ENCODE measurements at regions of chr19 and their contacts with region 1.

Region 1: GRCh38 chr19:17282488-17283255 is 971 bp downstream of the ANKLE1 start:
- ATAC-seq: peak; percentile 92 to 96 (median 94)
- H3K4me3 ChIP-seq: peak overlapping the region in 3 of 5 donors; percentile 10 to 20 (median 13)
- H3K27ac ChIP-seq: no peak overlapping the region
- H3K4me1 ChIP-seq: peaks cover 0 to 11% of the 10 kb centered on the region in 2 donors

Region 2: DNA sequence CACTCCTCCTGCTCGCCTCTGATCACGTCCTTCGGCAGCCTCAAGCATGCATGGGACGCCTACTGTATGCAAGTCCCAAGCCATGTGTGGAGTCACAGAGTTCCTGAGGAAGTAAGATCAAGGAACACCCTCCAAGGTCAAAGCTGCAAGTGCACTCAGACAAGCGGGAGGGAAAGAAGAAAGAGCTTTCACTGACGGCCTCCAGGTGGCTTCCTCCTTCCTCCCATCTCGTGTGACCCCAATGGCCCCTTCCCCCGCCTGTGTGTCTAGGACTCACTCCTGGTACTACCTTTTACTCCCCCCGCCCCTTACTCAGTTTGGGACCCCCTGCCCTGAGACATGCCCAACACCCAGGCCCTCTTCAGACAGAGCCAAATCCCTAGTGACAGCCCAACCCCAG is 213.5 kb before region 1 on chr19:
- in situ Hi-C with region 1: loop called in 8 of 9 experiments (anchors 10 to 25 kb)
- ATAC-seq: no peak
- H3K4me3 ChIP-seq: no peak overlapping the region
- H3K27ac ChIP-seq: no peak overlapping the region
- H3K4me1 ChIP-seq: peaks cover 5 to 8% of the 10 kb centered on the region in 2 donors

Region 3: DNA sequence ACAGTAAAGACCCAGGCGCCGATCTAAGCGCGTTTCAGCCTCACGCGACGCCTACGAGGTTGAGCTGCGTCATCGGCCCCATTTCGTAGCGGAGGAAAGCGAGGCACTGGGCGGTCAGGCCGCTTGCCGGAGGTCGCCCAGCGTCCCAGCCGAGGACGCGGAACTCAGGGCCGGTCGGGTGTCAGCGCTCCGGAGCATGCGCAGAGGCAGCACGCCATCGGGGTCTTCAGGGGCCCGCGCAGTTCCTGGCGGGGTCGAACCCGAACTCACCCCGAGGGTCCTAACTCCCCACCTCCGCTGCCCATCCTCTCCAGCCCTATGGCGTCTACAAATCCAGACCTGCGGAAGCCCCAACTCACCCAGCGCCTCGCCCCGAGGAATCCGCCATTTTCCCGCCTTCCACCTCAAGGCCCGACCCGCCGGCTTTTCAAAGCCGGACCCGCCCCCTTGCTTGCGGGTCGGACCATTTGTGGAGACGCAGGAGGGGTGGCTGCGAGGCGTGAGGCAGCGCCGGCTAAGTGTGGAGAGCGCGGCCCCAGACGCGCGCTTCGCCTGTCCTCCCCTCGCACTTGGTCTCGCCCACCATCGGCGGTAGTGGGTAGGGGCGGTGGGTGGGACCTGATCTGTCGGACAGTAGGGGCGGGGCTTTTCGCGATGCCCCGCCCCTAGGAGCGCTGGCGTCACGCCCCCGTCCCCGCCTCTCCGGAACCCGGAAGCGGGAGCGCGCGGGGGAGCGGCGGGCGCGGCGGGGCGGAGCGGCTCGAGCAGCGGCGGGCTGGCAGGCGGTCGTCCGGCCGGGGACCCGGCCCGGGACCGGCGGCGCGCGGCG is 207.4 kb before region 1 on chr19 and contains the starts of genes HAUS8 and MYO9B:
- in situ Hi-C with region 1: loop called in 6 of 9 experiments (anchors 10 to 25 kb)
- ATAC-seq: peak; percentile 69 to 95 (median 91)
- H3K4me3 ChIP-seq: peak within 1 kb of the TSS; percentile 61 to 92 (median 72)
- H3K27ac ChIP-seq: peak within 1 kb of the TSS; percentile 65 to 77
- H3K4me1 ChIP-seq: peaks cover 28 to 31% of the 10 kb centered on the region in 2 donors
- total RNA-seq, gene HAUS8: 3.4 to 14.8 (median 6.4) TPM
- total RNA-seq, gene MYO9B: 16.4 to 43.5 (median 27.3) TPM

Region 4: GRCh38 chr19:17947815-17948513 is 665.3 kb after region 1 on chr19:
- in situ Hi-C with region 1: no loop called
- ATAC-seq: peak; percentile 47 to 70 (median 58)
- H3K4me3 ChIP-seq: peak overlapping the region; percentile 13 to 33 (median 25)
- H3K27ac ChIP-seq: no peak overlapping the region
- H3K4me1 ChIP-seq: peaks cover 35 to 36% of the 10 kb centered on the region in 2 donors

Measured in motor neuron (in vitro differentiated cells).